Activated T-helper 2 cell treated with anti-CD3 and anti-CD28 coated beads, Interferon-gamma antibody, Interleukin-2, Interleukin-4, amounts not matched to agents 10 μg/mL and 5 μg/mL and 100 μg/mL, durations not matched to agents 14 hours and 24 hours and 36 hours (primary cell): ENCODE measurements at regions of chr19 and their contacts with region 1.

Region 1: DNA sequence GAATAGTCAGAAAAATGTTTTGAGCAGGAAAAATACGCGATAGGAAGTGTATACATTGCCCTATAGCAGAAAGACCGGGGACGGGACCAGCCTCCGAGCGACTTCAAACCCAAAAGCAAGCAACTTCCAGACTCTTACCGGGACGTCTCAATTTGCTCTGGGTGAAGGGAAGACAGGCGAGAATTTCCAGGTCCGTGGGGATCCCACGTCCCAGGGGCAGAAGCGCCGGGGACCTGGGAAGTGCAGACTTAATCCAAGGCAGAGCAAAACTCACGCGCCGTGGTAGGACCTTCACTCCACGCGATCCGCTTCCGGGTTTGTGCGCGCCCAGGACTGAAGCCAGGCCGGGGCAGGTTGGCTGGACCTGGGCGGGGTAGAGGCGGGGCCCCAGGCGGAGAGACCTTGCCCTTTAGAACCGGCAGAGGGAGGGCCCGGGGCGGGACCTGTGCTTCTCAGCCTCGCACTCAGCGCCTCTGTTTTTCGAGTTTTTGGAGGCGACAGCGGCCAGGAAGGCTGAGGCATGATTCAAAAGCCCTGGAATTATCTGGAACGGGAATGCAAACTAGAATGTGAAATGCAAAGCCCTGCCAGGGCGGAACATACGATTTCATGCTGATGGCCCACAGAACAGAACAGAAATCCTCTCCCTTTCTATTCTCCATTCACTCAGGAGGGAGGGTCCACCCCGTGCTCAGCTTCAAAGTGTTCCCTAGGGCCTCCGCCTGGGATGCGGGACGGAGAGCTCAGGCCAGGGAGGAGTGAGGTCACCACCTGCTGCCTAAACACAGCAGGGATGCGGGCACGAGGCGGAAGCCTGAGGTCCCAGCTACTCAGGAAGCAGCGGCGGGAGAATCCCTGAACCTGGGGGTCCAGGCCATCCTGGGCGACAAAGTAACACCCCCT is at the start of gene ZNF600:
- DNase-seq: peak; percentile 57
- H3K4me3 Mint-ChIP-seq: peak within 1 kb of the TSS; percentile 85
- H3K27ac Mint-ChIP-seq: peak within 1 kb of the TSS; percentile 50
- H3K4me1 Mint-ChIP-seq: peaks cover 22% of the 10 kb centered on the region
- H3K27me3 Mint-ChIP-seq: no peaks in the 10 kb centered on the region
- total RNA-seq, gene ZNF600: 7.9 and 11.3 TPM in 2 replicates

Region 2: GRCh38 chr19:52542984-52543664 is 243.6 kb before region 1 on chr19:
- intact Hi-C with region 1: no loop called
- DNase-seq: peak; percentile 13
- H3K4me3 Mint-ChIP-seq: no peak overlapping the region
- H3K27ac Mint-ChIP-seq: peak overlapping the region; percentile 40
- H3K4me1 Mint-ChIP-seq: peaks cover 14% of the 10 kb centered on the region
- H3K27me3 Mint-ChIP-seq: no peaks in the 10 kb centered on the region

Region 3: GRCh38 chr19:52823676-52824075 is 37.0 kb after region 1 on chr19:
- intact Hi-C with region 1: loop called (anchors 2 kb)
- DNase-seq: no peak
- H3K4me3 Mint-ChIP-seq: no peak overlapping the region
- H3K27ac Mint-ChIP-seq: no peak overlapping the region
- H3K4me1 Mint-ChIP-seq: peaks cover 12% of the 10 kb centered on the region
- H3K27me3 Mint-ChIP-seq: no peaks in the 10 kb centered on the region